Dorsolateral prefrontal cortex (tissue), 120 donors: ENCODE measurements at regions of chr15 and their contacts with region 1.

Region 1: GRCh38 chr15:28955160-28956008 is 69.6 kb downstream of the APBA2 start:
- DNase-seq: peak in 1 of 10 donors; percentile 28
- H3K4me3 ChIP-seq: no peak overlapping the region
- H3K27ac ChIP-seq: peak overlapping the region in 9 of 59 donors; percentile 6 to 74 (median 22)
- H3K27me3 ChIP-seq: no peaks in the 10 kb centered on the region
- CTCF ChIP-seq: no peak

Region 2: DNA sequence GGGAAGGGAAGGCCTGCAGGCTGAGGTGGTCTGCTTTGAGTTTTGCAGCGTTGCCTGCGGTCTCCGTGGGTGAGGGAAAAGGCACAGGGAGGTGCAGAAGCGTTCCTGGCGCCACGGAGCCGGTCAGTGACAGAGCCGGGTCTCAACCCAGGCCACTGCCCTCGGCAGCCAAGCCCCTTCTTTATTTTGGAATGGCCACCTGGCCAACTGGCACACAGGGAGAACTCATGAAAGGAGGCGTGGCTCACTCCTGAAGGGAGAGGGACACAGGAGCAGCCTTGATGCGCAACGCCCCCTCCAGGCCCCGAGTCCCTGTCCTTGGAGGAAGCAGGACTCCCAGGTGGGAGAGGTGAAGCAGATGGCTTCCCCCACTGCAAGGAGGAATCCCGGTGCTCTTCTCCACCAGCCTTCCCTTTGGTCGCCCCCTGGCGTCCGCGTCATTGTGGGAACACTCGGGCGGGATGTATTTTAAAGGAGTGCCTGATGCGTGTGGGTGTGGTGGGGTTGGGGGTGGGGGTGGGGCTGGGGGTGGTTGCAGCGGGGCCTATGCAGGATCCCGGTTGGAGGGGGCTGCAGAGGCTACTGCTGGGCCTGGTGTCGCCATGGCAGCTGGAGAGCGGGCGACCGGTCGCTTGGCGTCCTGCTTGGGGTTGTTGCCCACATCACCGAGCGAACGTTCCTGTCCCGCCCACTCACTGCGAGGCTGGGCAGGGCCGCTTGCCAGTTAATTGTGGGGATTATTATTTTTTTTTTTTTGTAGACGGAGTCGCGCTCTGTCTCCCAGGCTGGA is 37.1 kb before region 1 on chr15:
- intact Hi-C with region 1: loop called in 1 of 2 experiments (anchors 5 kb)
- DNase-seq: peak in 4 of 10 donors; percentile 34 to 69 (median 42)
- H3K4me3 ChIP-seq: peak overlapping the region in 2 of 59 donors; percentile 12 to 24
- H3K27ac ChIP-seq: peak overlapping the region in 24 of 59 donors; percentile 6 to 75 (median 47)
- H3K27me3 ChIP-seq: no peaks in the 10 kb centered on the region
- CTCF ChIP-seq: peak in 3 of 56 donors; percentile 4 to 16 (median 7)

Region 3: DNA sequence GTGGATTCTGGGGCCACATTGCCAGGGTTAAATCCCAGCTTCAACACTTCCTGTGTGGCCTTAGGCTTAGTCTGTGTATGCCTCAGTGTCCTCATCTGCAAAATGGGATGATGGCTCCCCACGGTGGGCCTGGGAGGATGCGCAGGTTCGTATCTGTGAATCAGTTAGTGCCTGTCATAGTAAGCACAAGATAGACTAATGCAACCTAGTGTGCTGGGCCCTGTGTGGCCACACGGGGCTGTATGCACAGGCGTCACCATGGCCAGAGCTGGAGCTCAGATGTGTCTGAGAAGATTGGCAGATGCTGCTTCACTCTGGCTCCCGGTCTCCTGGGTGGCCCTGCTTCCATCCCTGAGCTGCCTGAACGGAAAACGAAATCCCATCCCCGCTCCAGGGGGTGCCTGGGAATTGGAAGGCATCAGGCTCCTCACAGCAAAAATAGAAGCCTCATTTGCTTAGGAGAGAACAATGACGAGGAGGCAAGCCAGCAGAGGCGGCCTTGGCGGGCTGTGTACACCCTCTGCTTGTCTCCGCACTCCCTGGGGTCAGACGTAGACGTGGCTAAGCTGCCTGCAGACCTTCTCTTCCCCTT is 34.0 kb after region 1 on chr15:
- intact Hi-C with region 1: no loop called
- DNase-seq: peak in 9 of 10 donors; percentile 71 to 84 (median 79)
- H3K4me3 ChIP-seq: peak overlapping the region in 22 of 59 donors; percentile 1 to 52 (median 16)
- H3K27ac ChIP-seq: peak overlapping the region; percentile 83 to 99 (median 96)
- H3K27me3 ChIP-seq: no peaks in the 10 kb centered on the region
- CTCF ChIP-seq: peak in 52 of 56 donors; percentile 10 to 66 (median 46)